Activated T-helper 1 cell treated with anti-CD3 and anti-CD28 coated beads, Interleukin-12 subunit alpha, Interleukin-12 subunit beta, Interleukin-2, Interleukin-4 antibody, amounts not matched to agents 30 ng/mL and 10 ng/mL and 1 ng/mL, durations not matched to agents 14 hours and 24 hours and 36 hours (primary cell): ENCODE measurements at regions of chr7 and their contacts with region 1.

Region 1: GRCh38 chr7:134737566-134738345 is 41.7 kb upstream of the CALD1 start:
- DNase-seq: peak; percentile 5
- H3K4me3 Mint-ChIP-seq: no peak overlapping the region
- H3K27ac Mint-ChIP-seq: peak overlapping the region; percentile 80
- H3K4me1 Mint-ChIP-seq: peaks cover 22% of the 10 kb centered on the region
- H3K27me3 Mint-ChIP-seq: peaks cover 4% of the 10 kb centered on the region

Region 2: DNA sequence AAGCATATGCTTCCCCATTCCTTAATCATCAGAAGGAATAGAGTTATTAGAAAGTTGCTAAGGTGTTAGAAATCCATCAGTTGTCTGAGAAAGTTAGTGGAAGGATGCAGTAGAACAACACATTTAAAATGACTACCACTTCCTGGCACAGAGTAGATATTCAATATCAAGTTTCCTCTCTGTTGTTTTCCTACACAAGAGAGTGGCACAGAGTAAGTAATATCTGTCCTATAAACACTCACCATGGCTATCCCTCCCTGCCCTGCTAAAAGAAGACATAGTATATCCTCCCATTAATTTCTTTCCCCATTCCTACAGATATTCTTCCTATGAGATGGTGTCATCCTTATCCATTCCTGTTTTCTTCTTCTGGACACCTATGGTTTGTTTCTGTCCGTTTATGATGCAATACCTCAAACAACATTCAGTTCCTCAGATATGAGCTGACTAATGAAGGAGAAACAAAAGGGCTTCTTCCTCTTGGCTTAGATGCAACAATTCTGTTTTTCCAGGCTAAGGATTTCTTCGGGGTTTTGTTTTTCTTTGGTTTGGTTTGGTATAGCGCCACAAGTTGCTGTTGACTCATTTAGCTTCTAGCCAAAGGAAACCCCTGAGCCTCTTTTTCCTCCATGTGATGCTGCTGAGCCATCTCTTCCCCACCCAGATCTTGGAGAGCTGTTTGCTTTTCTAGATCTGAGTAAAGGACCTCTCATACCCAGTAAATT is 124.0 kb before region 1 on chr7:
- intact Hi-C with region 1: loop called (anchors 1 kb)
- DNase-seq: peak; percentile 5
- H3K4me3 Mint-ChIP-seq: peak overlapping the region; percentile 0
- H3K27ac Mint-ChIP-seq: peak overlapping the region; percentile 86
- H3K4me1 Mint-ChIP-seq: peaks cover 13% of the 10 kb centered on the region
- H3K27me3 Mint-ChIP-seq: peaks cover 15% of the 10 kb centered on the region

Region 3: GRCh38 chr7:134710859-134711624 is 26.7 kb before region 1 on chr7:
- intact Hi-C with region 1: loop called (anchors 1 kb)
- DNase-seq: peak; percentile 34
- H3K4me3 Mint-ChIP-seq: peak overlapping the region; percentile 60
- H3K27ac Mint-ChIP-seq: peak overlapping the region; percentile 72
- H3K4me1 Mint-ChIP-seq: peaks cover 21% of the 10 kb centered on the region
- H3K27me3 Mint-ChIP-seq: no peaks in the 10 kb centered on the region

Region 4: GRCh38 chr7:134865001-134865845 is 127.5 kb after region 1 on chr7:
- intact Hi-C with region 1: loop called (anchors 2 kb)
- DNase-seq: peak; percentile 44
- H3K4me3 Mint-ChIP-seq: peak overlapping the region; percentile 8
- H3K27ac Mint-ChIP-seq: peak overlapping the region; percentile 49
- H3K4me1 Mint-ChIP-seq: peaks cover 30% of the 10 kb centered on the region
- H3K27me3 Mint-ChIP-seq: no peaks in the 10 kb centered on the region

Region 5: GRCh38 chr7:134905375-134905774 is 167.6 kb after region 1 on chr7:
- intact Hi-C with region 1: no loop called
- DNase-seq: no peak
- H3K4me3 Mint-ChIP-seq: no peak overlapping the region
- H3K27ac Mint-ChIP-seq: no peak overlapping the region
- H3K4me1 Mint-ChIP-seq: peaks cover 15% of the 10 kb centered on the region
- H3K27me3 Mint-ChIP-seq: no peaks in the 10 kb centered on the region

Region 6: GRCh38 chr7:134920026-134920753 is 182.4 kb after region 1 on chr7:
- intact Hi-C with region 1: loop called (anchors 1 kb)
- DNase-seq: no peak
- H3K4me3 Mint-ChIP-seq: no peak overlapping the region
- H3K27ac Mint-ChIP-seq: no peak overlapping the region
- H3K4me1 Mint-ChIP-seq: no peaks in the 10 kb centered on the region
- H3K27me3 Mint-ChIP-seq: peaks cover 4% of the 10 kb centered on the region

Region 7: DNA sequence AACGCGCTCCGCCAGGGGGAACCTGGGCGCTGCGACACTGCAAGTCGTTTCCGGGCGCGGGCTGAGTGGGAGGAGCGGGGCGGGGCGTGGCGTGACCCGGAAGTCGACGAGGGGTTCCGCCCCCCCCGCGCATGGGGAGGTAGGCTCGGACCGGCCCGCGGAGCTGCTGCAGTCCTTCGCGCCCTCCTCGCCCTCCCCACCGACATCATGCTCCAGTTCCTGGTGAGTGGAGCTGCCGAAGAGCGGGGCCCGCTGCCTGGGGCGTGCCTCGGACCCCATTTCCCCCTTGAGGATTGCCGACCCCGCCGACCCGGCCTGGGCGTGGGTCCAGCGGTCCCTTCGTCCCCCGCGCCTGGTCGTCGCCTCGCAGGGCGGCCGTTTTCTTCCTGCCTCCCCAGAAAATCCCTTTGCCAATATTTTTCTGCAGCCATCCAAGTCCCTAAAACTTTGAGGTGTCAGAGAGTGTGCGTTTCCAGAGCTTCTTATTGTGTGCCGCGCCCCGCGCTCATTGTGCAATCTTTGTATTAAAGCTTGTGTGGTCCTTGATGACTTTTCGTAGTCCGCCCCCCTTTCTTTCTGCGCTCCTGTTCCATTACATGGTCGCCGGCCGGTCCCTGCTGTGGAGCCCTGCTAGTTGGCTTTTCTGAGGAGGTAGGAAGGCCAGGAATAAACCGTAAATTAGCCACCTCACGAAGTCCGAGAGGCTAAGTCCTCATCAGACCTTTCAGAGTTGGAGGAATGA is 924.8 kb after region 1 on chr7 and contains the start of gene STMP1:
- intact Hi-C with region 1: loop called (anchors 10 kb)
- DNase-seq: peak; percentile 93
- H3K4me3 Mint-ChIP-seq: peak within 1 kb of the TSS; percentile 97
- H3K27ac Mint-ChIP-seq: peak within 1 kb of the TSS; percentile 93
- H3K4me1 Mint-ChIP-seq: peaks cover 22% of the 10 kb centered on the region
- H3K27me3 Mint-ChIP-seq: no peaks in the 10 kb centered on the region
- total RNA-seq, gene STMP1: 22.7 and 24.7 TPM in 2 replicates